Panc1 (cell line): ENCODE measurements at regions of chr17 and their contacts with region 1.

Region 1: DNA sequence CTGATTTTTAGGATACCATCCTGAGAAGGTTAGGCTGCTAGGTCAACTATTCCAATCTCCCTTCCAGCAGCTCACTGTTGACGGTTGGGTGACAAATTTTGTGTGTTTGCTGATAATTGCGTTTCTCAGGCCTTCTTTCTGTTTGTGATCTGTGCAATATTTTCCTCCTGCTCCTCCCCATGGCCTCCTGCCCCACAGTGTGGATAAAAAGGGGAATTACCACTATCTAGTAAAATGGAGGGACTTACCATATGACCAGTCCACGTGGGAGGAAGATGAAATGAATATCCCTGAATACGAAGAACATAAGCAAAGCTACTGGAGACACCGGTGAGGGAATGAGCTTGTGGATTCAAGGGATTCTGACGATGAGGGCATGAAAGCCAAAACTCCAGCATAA is 9.2 kb downstream of the CHD3 start:
- DNase-seq: no peak
- ATAC-seq: peak; percentile 78
- H3K4me3 ChIP-seq: no peak overlapping the region
- H3K27ac ChIP-seq: no peak overlapping the region; the same call in 1 of the 2 replicates
- H3K4me1 ChIP-seq: no peaks in the 10 kb centered on the region
- H3K27me3 ChIP-seq: no peaks in the 10 kb centered on the region
- CTCF ChIP-seq: no peak; the same call in 1 of the 2 replicates

Region 2: GRCh38 chr17:7835814-7836595 is 61.8 kb before region 1 on chr17:
- CTCF ChIA-PET with region 1: no interaction called
- POLR2A ChIA-PET with region 1: interaction called, 16 read pairs
- in situ Hi-C with region 1: no loop called
- intact Hi-C with region 1: no loop called
- DNase-seq: no peak
- ATAC-seq: peak; percentile 29
- H3K4me3 ChIP-seq: peak overlapping the region; percentile 66 to 83
- H3K27ac ChIP-seq: peak overlapping the region; percentile 82
- H3K4me1 ChIP-seq: peaks cover 40% of the 10 kb centered on the region
- H3K27me3 ChIP-seq: no peaks in the 10 kb centered on the region
- CTCF ChIP-seq: no peak

Region 3: DNA sequence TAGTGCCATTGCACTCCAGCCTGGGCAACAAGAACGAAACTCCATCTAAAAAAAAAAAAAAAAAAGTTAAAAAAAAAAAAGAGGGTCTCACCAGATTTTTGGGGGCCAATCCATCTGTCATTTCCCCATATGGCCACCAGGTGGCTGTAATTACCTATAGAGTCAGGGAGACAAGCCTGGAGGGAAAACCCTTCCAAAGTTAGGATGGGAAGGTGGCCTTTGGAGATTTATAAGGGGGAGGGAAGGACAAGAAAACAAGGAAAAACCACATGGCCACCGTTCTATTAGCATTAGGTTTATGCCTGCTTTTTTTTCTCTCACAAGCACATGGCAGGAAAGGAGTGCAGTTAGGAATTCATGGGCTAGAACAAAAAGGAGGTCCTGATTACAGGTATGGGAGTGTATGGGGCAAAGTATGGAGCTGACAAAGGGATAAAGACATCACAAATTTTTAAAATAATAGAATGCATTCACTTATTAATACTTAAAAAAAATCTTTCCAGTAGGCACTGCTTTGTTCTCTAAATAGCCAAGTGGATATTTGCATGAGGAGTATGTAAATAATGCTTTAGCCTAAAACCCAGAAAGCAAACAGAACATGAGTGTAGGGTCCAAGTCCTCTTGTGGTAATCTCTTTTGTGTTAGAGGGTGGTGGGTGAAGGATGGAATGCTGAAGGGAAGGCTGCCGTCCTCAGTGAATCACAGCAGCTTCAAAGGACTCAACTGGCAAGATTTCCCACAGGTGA is 34.9 kb before region 1 on chr17:
- CTCF ChIA-PET with region 1: no interaction called
- POLR2A ChIA-PET with region 1: no interaction called
- in situ Hi-C with region 1: no loop called
- intact Hi-C with region 1: loop called (anchors 2 kb)
- DNase-seq: no peak
- ATAC-seq: no peak
- H3K4me3 ChIP-seq: no peak overlapping the region
- H3K27ac ChIP-seq: no peak overlapping the region
- H3K4me1 ChIP-seq: peaks cover 7% of the 10 kb centered on the region; the same call in 1 of the 2 replicates
- H3K27me3 ChIP-seq: no peaks in the 10 kb centered on the region
- CTCF ChIP-seq: peak; percentile 86